MCF 10A (cell line): ENCODE measurements at regions of chr11 and their contacts with region 1.

Region 1: DNA sequence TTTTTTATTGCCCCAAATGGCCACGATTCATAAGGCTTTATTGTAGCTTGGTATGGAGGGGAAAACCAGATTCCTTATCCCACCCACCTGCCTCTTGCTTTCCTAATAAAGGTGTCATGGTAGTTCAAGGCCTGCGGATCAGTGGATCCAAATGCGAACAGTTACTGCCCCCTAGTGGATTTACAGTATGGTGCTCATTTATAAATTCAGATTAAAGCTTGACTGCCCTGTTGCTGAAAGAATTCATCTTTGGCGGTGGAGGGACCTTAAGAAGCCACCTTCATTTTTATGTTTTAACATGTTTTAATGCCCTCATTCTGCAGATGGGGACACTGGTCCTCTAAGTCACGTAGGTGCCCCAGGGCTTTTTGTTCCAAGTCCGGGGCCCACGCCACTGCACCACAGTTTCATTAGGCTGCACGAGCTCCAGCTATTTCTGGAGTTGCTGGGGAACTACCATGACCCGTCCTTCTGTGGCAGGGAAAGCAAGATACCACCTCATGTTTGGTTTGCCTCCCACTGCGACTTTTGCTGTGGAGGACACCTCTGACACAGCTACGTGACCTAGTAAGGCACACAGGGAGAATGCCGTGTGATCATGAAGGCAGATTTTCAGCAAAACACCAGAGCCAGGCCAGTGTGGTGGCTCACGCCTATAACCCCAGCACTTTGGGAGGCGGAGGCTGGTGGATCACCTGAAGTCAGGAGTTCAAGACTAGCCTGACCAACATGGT is 15.6 kb upstream of the INCENP start:
- DNase-seq: peak; percentile 69
- H3K4me3 Mint-ChIP-seq: no peak overlapping the region
- H3K27ac Mint-ChIP-seq: no peak overlapping the region
- H3K4me1 Mint-ChIP-seq: no peaks in the 10 kb centered on the region
- H3K27me3 Mint-ChIP-seq: no peaks in the 10 kb centered on the region
- CTCF ChIP-seq: peak; percentile 79

Region 2: GRCh38 chr11:61747192-61747966 is 360.8 kb before region 1 on chr11:
- CTCF ChIA-PET with region 1: interaction called, 12 read pairs
- POLR2A ChIA-PET with region 1: no interaction called
- intact Hi-C with region 1: loop called (anchors 1 kb)
- DNase-seq: peak; percentile 69
- H3K4me3 Mint-ChIP-seq: no peak overlapping the region
- H3K27ac Mint-ChIP-seq: no peak overlapping the region
- H3K4me1 Mint-ChIP-seq: no peaks in the 10 kb centered on the region
- H3K27me3 Mint-ChIP-seq: no peaks in the 10 kb centered on the region
- CTCF ChIP-seq: peak; percentile 84

Region 3: DNA sequence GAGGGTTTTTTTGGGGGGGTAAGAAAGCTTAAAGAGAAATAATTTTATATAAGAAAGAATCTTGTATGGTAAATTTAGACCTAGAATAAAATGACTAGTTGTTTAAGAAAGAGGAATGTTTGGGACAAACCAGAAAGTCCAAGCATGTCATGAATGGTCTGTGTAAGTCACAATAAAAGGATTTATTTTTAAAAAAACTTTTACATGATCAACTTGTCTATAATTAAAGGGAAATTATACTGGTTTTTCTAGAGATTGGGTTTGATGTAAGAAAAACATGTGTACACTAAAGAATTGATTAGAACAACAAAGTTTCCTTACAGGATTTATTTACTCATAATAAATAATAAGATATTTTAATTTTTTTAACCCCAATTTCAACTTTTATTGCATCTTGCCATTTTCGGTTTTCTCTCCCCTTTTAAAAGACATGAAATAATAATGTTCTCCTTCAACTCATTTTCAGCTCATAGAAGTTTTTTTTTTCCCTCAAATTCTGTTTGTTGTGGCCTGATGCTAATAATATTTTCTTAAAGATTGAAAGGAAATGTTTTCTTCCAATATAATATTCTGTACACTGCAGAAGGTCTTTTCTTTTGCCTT is 19.8 kb before region 1 on chr11:
- CTCF ChIA-PET with region 1: interaction called, 57 read pairs
- POLR2A ChIA-PET with region 1: no interaction called
- intact Hi-C with region 1: no loop called
- DNase-seq: peak; percentile 27
- H3K4me3 Mint-ChIP-seq: no peak overlapping the region
- H3K27ac Mint-ChIP-seq: no peak overlapping the region
- H3K4me1 Mint-ChIP-seq: no peaks in the 10 kb centered on the region
- H3K27me3 Mint-ChIP-seq: no peaks in the 10 kb centered on the region
- CTCF ChIP-seq: no peak

Region 4: DNA sequence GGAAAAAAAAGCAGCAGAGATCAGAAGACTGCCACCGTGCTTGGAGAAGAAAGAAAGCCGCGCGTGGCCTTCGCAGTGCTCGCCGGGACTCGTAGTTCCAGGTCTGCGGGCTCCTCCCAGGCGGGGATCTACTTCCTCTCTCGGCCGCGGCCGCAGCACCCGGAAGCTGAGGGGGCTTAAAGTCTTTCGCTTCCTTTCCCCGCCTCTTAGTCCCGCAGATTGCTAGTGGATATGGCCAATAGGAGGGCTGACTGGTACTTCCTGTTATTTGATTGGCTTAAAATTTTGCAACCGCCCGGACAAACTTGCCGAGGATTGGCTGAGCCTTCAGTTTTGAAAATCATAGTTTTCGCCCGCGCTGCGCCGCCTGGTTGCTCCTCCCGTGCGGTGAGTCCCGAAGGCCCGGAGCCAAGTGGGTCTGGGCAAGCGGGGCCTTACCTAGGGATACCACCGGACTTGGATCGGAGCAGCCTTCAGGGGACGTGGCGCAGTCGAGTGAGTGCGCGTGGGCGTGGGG is 15.5 kb after region 1 on chr11 and contains the start of gene INCENP:
- CTCF ChIA-PET with region 1: interaction called, 20 read pairs
- POLR2A ChIA-PET with region 1: interaction called, 13 read pairs
- intact Hi-C with region 1: no loop called
- DNase-seq: peak; percentile 99
- H3K4me3 Mint-ChIP-seq: peak within 1 kb of the TSS; percentile 93
- H3K27ac Mint-ChIP-seq: peak within 1 kb of the TSS; percentile 57
- H3K4me1 Mint-ChIP-seq: peaks cover 13% of the 10 kb centered on the region
- H3K27me3 Mint-ChIP-seq: no peaks in the 10 kb centered on the region
- CTCF ChIP-seq: no peak
- total RNA-seq, gene INCENP: 40.4 and 56.2 TPM in 2 replicates

Region 5: DNA sequence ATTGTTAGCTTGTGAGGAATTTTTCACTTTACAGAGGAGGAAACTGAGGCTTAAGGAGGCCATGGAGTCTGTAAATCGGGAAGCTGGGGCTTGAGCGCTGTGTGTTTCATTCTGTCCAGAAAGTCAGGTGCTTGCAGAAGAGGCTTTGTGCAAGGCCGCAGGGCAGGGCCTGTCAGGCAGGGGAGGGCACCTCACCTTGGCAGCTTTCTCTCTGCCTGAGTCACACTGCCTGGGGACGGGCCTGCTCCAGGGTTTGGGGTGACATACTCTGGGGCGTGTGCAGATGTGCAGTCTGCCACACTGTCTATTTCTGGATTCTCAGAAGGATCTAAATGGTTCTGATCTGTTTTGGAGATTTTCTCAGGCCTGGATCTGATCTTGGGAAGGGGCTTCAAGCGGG is 24.0 kb after region 1 on chr11:
- CTCF ChIA-PET with region 1: interaction called, 22 read pairs
- POLR2A ChIA-PET with region 1: no interaction called
- intact Hi-C with region 1: no loop called
- DNase-seq: peak; percentile 70
- H3K4me3 Mint-ChIP-seq: peak overlapping the region; percentile 12
- H3K27ac Mint-ChIP-seq: peak overlapping the region; percentile 56
- H3K4me1 Mint-ChIP-seq: peaks cover 20% of the 10 kb centered on the region
- H3K27me3 Mint-ChIP-seq: no peaks in the 10 kb centered on the region
- CTCF ChIP-seq: no peak

Region 6: GRCh38 chr11:62186195-62186594 is 78.0 kb after region 1 on chr11:
- CTCF ChIA-PET with region 1: no interaction called
- POLR2A ChIA-PET with region 1: no interaction called
- intact Hi-C with region 1: no loop called
- DNase-seq: no peak
- H3K4me3 Mint-ChIP-seq: no peak overlapping the region
- H3K27ac Mint-ChIP-seq: no peak overlapping the region
- H3K4me1 Mint-ChIP-seq: no peaks in the 10 kb centered on the region
- H3K27me3 Mint-ChIP-seq: peaks cover 33% of the 10 kb centered on the region
- CTCF ChIP-seq: no peak

Region 7: DNA sequence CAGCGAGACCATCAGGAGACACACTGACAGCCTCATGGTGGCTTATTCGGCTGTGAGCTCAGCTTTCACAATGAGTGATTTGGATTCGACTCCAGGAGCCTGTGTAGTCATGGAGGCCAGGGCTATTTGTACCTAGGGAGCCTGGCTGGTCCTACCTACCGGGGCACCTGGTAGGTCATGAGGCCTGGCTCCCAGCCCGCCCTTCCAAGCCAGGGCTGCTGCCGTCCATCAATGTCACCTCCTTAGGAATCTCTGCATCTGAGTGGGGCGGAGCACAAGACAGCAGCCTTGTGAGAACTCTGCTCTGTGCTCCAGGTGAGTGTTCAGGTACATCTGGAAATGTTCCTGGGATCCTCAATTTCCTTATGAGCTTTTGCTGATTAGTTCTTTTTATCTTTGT is 190.8 kb after region 1 on chr11 and contains the start of gene SCGB1D4:
- CTCF ChIA-PET with region 1: no interaction called
- POLR2A ChIA-PET with region 1: no interaction called
- intact Hi-C with region 1: no loop called
- DNase-seq: no peak
- H3K4me3 Mint-ChIP-seq: no peak within 1 kb of the TSS
- H3K27ac Mint-ChIP-seq: no peak within 1 kb of the TSS
- H3K4me1 Mint-ChIP-seq: no peaks in the 10 kb centered on the region
- H3K27me3 Mint-ChIP-seq: peaks cover 45% of the 10 kb centered on the region
- CTCF ChIP-seq: no peak
- total RNA-seq, gene SCGB1D4: not detected in 2 replicates

Region 8: GRCh38 chr11:62372871-62373270 is 264.7 kb after region 1 on chr11:
- CTCF ChIA-PET with region 1: interaction called, 11 read pairs
- POLR2A ChIA-PET with region 1: no interaction called
- intact Hi-C with region 1: no loop called
- DNase-seq: no peak
- H3K4me3 Mint-ChIP-seq: no peak overlapping the region
- H3K27ac Mint-ChIP-seq: no peak overlapping the region
- H3K4me1 Mint-ChIP-seq: no peaks in the 10 kb centered on the region
- H3K27me3 Mint-ChIP-seq: peaks cover 15% of the 10 kb centered on the region
- CTCF ChIP-seq: no peak